ENCODE measurements at regions of chr2 and their contacts with region 1.

Region 1: DNA sequence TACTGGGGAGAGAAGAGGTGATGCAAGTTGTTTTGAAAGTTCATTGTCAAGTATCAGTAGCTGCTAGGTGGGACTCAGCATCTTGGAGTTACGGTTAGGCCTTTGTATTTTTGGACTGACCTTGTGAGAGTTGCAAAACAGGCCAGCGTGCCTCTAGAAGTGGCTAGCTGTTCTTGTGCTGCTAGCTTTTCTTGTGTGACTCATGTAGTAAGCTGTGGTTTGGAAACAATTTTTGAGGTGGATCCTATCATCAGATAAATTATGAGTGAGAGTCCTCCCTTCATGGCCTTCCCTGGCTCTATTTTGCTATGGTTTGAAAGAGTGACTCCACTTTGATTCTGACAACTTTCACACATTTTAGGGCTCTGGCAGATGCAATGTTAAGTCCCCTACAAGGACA is 409.2 kb upstream of the HS6ST1 start:
- DNase-seq: peak; percentile 56
- H3K4me3 Mint-ChIP-seq: no peak overlapping the region
- H3K27ac Mint-ChIP-seq: no peak overlapping the region
- H3K4me1 Mint-ChIP-seq: peaks cover 17% of the 10 kb centered on the region
- H3K27me3 Mint-ChIP-seq: peaks cover 13% of the 10 kb centered on the region

Region 2: GRCh38 chr2:128086244-128086643 is 641.7 kb before region 1 on chr2:
- intact Hi-C with region 1: no loop called
- DNase-seq: no peak
- H3K4me3 Mint-ChIP-seq: no peak overlapping the region
- H3K27ac Mint-ChIP-seq: no peak overlapping the region
- H3K4me1 Mint-ChIP-seq: peaks cover 4% of the 10 kb centered on the region
- H3K27me3 Mint-ChIP-seq: no peaks in the 10 kb centered on the region

Region 3: GRCh38 chr2:128549646-128550260 is 178.2 kb before region 1 on chr2:
- intact Hi-C with region 1: no loop called
- DNase-seq: no peak
- H3K4me3 Mint-ChIP-seq: no peak overlapping the region
- H3K27ac Mint-ChIP-seq: no peak overlapping the region
- H3K4me1 Mint-ChIP-seq: no peaks in the 10 kb centered on the region
- H3K27me3 Mint-ChIP-seq: no peaks in the 10 kb centered on the region

Region 4: GRCh38 chr2:128623776-128624424 is 104.0 kb before region 1 on chr2:
- intact Hi-C with region 1: loop called (anchors 5 kb)
- DNase-seq: peak; percentile 79
- H3K4me3 Mint-ChIP-seq: peak overlapping the region; percentile 58
- H3K27ac Mint-ChIP-seq: no peak overlapping the region
- H3K4me1 Mint-ChIP-seq: peaks cover 13% of the 10 kb centered on the region
- H3K27me3 Mint-ChIP-seq: peaks cover 43% of the 10 kb centered on the region

Region 5: DNA sequence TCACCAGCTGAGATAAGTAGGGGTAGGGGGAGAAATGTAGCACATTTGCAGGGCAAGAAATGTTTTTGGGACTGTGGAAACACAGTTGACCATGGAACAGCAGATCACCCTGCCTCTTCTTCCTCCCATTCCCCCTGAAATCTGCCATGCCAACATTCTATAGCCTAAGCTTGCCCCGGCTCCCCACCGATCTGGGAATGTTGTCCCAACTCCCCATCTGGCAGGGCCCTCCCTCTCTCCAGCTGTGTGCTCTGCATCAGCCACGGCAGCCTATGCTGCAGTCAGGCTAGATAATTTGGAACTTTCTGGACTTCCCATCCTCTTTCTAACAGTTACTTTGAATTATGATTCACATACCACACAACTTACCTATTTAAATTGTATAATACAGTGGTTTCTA is 826.5 kb after region 1 on chr2:
- intact Hi-C with region 1: no loop called
- DNase-seq: no peak
- H3K4me3 Mint-ChIP-seq: no peak overlapping the region
- H3K27ac Mint-ChIP-seq: no peak overlapping the region
- H3K4me1 Mint-ChIP-seq: no peaks in the 10 kb centered on the region
- H3K27me3 Mint-ChIP-seq: no peaks in the 10 kb centered on the region